H1 (cell line): ENCODE measurements at regions of chr17 and their contacts with region 1.

Region 1: GRCh38 chr17:38333635-38334295 is 10.0 kb downstream of the GPR179 start:
- DNase-seq: peak; percentile 54 to 100
- H3K4me3 ChIP-seq: no peak overlapping the region
- H3K27ac ChIP-seq: no peak overlapping the region
- H3K4me1 ChIP-seq: peaks cover 0 to 5% (median 0%) of the 10 kb centered on the region in 4 experiments; a peak in 2 of 7 replicates
- H3K27me3 ChIP-seq: no peaks in the 10 kb centered on the region
- CTCF ChIP-seq: peak; percentile 94 to 99 (median 98)
- EP300 ChIP-seq: no peak
- POLR2A ChIP-seq: no peak
- RAD21 ChIP-seq: peak; percentile 87 to 93

Region 2: DNA sequence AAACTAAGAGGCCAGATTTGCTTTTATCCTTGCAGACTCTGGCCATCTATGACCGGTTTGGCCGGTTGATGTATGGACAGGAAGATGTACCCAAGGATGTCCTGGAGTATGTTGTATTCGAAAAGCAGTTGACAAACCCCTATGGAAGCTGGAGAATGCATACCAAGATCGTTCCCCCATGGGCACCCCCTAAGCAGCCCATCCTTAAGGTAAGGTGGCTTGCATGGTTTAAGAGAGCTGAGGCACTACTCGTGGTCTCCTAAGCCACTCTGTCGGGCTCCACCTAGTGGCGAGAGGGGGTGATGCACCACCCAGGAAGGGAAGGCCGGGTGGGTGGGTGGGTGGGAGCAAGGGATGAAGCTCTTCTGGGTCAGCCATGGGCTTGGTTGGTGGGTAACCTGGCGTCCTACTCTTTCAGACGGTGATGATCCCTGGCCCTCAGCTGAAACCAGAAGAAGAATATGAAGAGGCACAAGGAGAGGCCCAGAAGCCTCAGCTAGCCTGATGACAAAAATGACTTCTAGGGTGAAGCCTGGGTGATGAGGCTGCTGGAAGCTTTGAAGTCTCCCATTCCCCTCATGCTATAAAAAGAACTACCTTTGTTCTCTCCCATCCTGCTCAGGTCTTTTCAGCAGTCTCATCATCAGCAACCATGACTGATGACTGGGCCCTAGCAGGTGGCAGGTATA is 11.5 kb before region 1 on chr17:
- CTCF ChIA-PET with region 1: interaction called, 190 read pairs
- POLR2A ChIA-PET with region 1: interaction called, 28 read pairs
- DNase-seq: peak in 1 of 2 experiments; percentile 91
- H3K4me3 ChIP-seq: no peak overlapping the region
- H3K27ac ChIP-seq: no peak overlapping the region
- H3K4me1 ChIP-seq: peaks cover 0 to 10% (median 7%) of the 10 kb centered on the region in 4 experiments; a peak in 4 of 7 replicates
- H3K27me3 ChIP-seq: no peaks in the 10 kb centered on the region
- CTCF ChIP-seq: peak; percentile 58 to 80 (median 70); a peak in 3 of 4 replicates
- EP300 ChIP-seq: no peak
- POLR2A ChIP-seq: no peak
- RAD21 ChIP-seq: peak in 1 of 2 experiments; percentile 53; a peak in 2 of 4 replicates

Region 3: DNA sequence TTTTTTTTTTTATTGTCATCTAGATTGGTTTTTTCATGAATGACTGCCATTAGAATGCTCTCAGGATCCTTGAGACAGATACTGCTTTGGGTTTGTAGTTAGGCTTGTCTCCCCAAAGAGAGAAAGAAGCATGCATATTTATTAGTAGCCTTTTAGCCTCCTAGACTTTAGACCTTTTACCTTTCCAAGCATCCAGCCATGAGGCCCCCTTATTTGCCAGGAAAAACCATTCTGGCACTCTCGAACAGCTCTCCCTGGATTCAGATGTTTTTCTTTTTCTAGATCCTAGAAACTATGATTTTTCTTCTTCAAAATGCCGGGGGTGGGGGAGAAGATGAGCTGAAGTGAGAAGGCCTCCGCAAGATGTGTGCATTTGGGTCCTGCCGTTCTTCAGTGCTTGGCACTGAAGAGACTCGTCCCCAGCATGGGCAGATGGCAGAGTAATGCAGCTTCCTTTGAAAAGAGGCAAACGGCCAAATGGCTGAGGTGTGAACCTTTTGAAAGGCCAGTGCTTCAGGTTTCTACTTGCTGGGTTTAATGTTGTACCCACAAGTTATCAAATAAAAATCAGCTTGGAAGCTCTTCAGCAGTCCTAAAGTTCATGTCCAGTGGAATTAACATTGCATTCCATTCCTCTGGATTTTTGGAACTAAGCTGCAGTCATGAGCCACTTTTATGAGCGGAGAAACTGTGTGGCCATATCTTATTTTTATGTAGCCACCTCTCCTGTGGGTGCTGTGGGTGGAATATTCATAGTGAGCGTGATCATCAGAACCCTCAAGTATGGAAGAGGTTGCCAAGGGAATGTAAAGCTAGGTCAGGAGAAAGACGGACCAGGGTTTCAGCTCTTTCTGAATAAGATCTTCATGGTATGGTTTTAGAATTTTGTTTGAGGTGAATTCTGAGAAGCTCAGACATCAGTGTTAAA is 25.1 kb after region 1 on chr17:
- CTCF ChIA-PET with region 1: interaction called, 77 read pairs
- POLR2A ChIA-PET with region 1: interaction called, 4 read pairs
- DNase-seq: no peak
- H3K4me3 ChIP-seq: no peak overlapping the region
- H3K27ac ChIP-seq: no peak overlapping the region
- H3K4me1 ChIP-seq: peaks cover 0 to 4% (median 2%) of the 10 kb centered on the region in 4 experiments; a peak in 2 of 7 replicates
- H3K27me3 ChIP-seq: no peaks in the 10 kb centered on the region
- CTCF ChIP-seq: no peak
- EP300 ChIP-seq: no peak
- POLR2A ChIP-seq: no peak
- RAD21 ChIP-seq: no peak

Region 4: DNA sequence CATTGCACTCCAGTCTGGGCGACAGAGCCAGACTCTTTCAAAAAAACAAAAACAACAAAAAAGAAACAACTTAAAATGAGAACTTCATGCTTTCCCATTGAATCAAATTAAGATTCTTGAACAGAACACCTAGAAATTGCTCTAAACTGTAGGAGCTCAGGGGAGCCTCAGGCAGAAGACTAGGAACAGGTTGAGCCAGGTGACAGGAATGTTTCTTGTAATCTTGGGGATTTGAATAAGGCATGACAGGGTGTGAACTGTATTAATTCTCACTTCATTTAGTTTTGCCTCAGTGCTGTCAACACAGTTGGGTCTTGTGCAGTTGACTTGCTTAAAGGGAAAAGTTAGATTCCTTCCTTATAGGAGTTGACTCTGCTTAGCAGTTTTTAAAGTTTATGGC is 45.7 kb after region 1 on chr17:
- CTCF ChIA-PET with region 1: interaction called, 39 read pairs
- POLR2A ChIA-PET with region 1: no interaction called
- DNase-seq: no peak
- H3K4me3 ChIP-seq: no peak overlapping the region
- H3K27ac ChIP-seq: no peak overlapping the region
- H3K4me1 ChIP-seq: no peaks in the 10 kb centered on the region
- H3K27me3 ChIP-seq: no peaks in the 10 kb centered on the region
- CTCF ChIP-seq: no peak
- EP300 ChIP-seq: no peak
- POLR2A ChIP-seq: no peak
- RAD21 ChIP-seq: no peak

Region 5: DNA sequence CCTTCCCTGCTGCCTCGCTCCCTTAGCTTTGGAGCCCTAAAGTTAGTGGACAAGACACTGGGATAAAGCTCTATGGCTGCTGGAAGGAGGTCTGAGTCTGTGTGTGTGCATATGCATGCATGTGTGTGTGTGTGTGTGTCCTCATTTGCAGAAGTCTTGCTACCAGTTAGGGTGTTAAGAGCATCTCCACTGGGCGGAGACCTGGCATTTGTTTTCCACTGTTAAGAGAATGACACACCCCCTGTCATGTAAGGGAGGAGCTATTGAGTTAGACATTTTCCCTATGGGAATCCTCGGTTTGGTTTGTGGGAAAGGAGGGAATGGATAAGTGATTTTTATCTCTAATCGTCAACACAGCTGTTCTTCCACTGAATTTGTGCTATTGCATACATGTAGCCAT is 69.7 kb after region 1 on chr17:
- CTCF ChIA-PET with region 1: interaction called, 400 read pairs
- POLR2A ChIA-PET with region 1: no interaction called
- DNase-seq: no peak
- H3K4me3 ChIP-seq: peak overlapping the region in 1 of 4 experiments; percentile 23; a peak in 1 of 8 replicates
- H3K27ac ChIP-seq: no peak overlapping the region; the same call in 1 of the 2 replicates
- H3K4me1 ChIP-seq: peaks cover 13 to 27% (median 19%) of the 10 kb centered on the region in 4 experiments
- H3K27me3 ChIP-seq: no peaks in the 10 kb centered on the region
- CTCF ChIP-seq: no peak
- EP300 ChIP-seq: no peak
- POLR2A ChIP-seq: no peak
- RAD21 ChIP-seq: no peak

Region 6: GRCh38 chr17:38415250-38416194 is 81.8 kb after region 1 on chr17:
- CTCF ChIA-PET with region 1: interaction called, 400 read pairs
- POLR2A ChIA-PET with region 1: interaction called, 13 read pairs
- DNase-seq: peak in 1 of 2 experiments; percentile 86
- H3K4me3 ChIP-seq: peak overlapping the region in 3 of 4 experiments; percentile 20 to 55 (median 39); a peak in 6 of 8 replicates
- H3K27ac ChIP-seq: peak overlapping the region; percentile 94
- H3K4me1 ChIP-seq: peaks cover 4 to 44% (median 37%) of the 10 kb centered on the region in 4 experiments
- H3K27me3 ChIP-seq: peaks cover 0 to 19% (median 7%) of the 10 kb centered on the region in 4 experiments; a peak in 4 of 7 replicates
- CTCF ChIP-seq: no peak; a peak in 1 of 4 replicates
- EP300 ChIP-seq: peak in 1 of 2 experiments; percentile 57; a peak in 1 of 3 replicates
- POLR2A ChIP-seq: peak in 1 of 2 experiments; percentile 74; a peak in 2 of 3 replicates
- RAD21 ChIP-seq: no peak

Region 7: DNA sequence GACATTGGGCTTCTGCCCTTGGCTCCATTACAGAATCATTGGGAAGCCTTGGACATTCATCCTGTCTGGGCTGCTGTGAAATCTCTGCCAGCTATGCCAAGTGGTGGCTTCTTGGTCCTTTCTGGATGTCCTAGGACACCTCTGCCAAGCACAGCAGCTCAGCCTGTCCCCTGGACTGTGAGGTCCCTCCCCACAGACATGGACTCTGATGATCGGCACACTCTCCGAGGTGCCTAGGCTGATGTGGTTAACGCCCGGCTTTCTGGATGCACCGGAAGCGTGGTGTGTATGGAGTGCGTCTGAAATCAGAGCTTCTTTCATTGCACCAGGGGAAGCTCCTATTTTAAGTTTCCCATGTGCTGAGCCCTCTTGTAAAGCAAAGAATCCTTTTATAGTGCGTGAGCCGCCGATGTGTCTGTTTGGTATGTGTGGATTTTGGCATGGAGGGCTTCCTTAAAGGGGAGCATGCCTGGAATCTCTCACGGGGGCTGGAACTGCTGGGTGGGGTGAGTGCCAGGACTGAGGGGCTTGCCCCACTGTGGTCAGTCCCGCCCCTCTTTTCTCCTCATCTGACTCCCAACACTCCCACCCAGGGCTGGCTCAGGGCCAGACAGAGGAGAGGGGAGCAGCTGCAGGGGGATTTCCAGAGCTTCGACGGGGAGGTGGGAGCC is 87.5 kb after region 1 on chr17:
- CTCF ChIA-PET with region 1: interaction called, 400 read pairs
- POLR2A ChIA-PET with region 1: interaction called, 6 read pairs
- DNase-seq: no peak
- H3K4me3 ChIP-seq: peak overlapping the region in 1 of 4 experiments; percentile 4; a peak in 2 of 8 replicates
- H3K27ac ChIP-seq: no peak overlapping the region
- H3K4me1 ChIP-seq: peaks cover 21 to 64% (median 52%) of the 10 kb centered on the region in 4 experiments
- H3K27me3 ChIP-seq: peaks cover 0 to 19% (median 7%) of the 10 kb centered on the region in 4 experiments; a peak in 4 of 7 replicates
- CTCF ChIP-seq: no peak
- EP300 ChIP-seq: no peak
- POLR2A ChIP-seq: no peak
- RAD21 ChIP-seq: no peak

Region 8: DNA sequence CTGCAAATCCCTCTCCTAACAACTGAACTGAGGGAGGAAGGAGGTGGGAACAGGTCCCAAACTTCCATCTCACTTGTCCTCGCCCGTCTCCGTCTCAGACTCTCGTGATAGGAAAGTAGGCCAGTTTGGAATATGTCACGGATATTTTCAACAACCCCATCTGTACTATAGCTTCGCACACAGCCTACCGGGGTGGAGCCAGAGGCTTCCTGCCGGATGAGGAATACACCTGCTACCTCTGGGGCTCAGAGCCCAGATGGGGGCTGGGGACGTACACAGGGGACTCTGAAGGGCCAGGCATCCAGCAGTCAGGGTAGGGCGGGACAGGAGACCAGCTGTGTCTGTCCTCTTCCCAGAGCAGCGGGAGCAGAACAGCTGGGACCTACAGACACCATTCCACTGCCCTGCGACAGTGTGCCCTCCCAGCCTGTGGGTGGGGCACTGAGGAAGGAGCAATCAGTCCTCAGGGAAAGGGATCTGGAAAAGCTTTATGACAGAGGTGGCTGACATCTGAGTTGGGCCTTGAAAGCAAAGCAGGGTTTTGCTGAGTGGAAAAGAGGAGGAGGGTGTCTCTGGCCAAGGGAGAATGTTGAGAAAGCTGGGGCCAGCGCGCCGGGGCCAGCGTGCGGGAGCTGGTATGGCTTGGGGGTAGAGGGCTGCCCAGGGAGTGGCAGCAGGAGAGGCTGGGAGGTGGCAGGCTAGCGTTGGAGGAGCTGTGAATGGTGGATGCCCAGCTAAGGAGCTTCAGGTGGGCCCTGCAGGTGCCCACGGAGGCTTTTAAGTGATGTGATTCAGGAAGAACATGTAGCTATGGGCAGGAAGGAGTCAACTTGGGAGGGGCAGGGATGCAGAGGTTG is 283.5 kb after region 1 on chr17:
- CTCF ChIA-PET with region 1: no interaction called
- POLR2A ChIA-PET with region 1: no interaction called
- DNase-seq: no peak
- H3K4me3 ChIP-seq: no peak overlapping the region
- H3K27ac ChIP-seq: no peak overlapping the region
- H3K4me1 ChIP-seq: peaks cover 6 to 18% (median 10%) of the 10 kb centered on the region in 4 experiments
- H3K27me3 ChIP-seq: no peaks in the 10 kb centered on the region
- CTCF ChIP-seq: no peak
- EP300 ChIP-seq: no peak
- POLR2A ChIP-seq: no peak
- RAD21 ChIP-seq: no peak